K562 (cell line): ENCODE measurements at regions of chr17 and their contacts with region 1.

Region 1: GRCh38 chr17:45394913-45395568 is 37.6 kb downstream of the ARHGAP27 start:
- DNase-seq: peak; percentile 93 to 95 (median 94)
- ATAC-seq: peak; percentile 94
- H3K4me3 ChIP-seq: no peak overlapping the region
- H3K27ac ChIP-seq: peak overlapping the region; percentile 61
- H3K4me1 ChIP-seq: peaks cover 14 to 29% of the 10 kb centered on the region in 2 experiments; a peak in 4 of 5 replicates
- H3K27me3 ChIP-seq: 0 out of 5 replicates have a peak, but pooled peaks cover 0 to 4% of the 10 kb centered on the region in 2 experiments
- CTCF ChIP-seq: peak; percentile 87 to 90 (median 88)
- EP300 ChIP-seq: peak; percentile 87
- POLR2A ChIP-seq: no peak
- RAD21 ChIP-seq: peak; percentile 69 to 84

Region 2: GRCh38 chr17:45172454-45173286 is 222.4 kb before region 1 on chr17:
- CTCF ChIA-PET with region 1: no interaction called
- POLR2A ChIA-PET with region 1: no interaction called
- in situ Hi-C with region 1: no loop called
- intact Hi-C with region 1: no loop called
- DNase-seq: no peak
- ATAC-seq: no peak
- H3K4me3 ChIP-seq: no peak overlapping the region
- H3K27ac ChIP-seq: no peak overlapping the region
- H3K4me1 ChIP-seq: peaks cover 2 to 38% of the 10 kb centered on the region in 2 experiments; a peak in 3 of 5 replicates
- H3K27me3 ChIP-seq: no peaks in the 10 kb centered on the region
- CTCF ChIP-seq: no peak
- EP300 ChIP-seq: no peak
- POLR2A ChIP-seq: no peak
- RAD21 ChIP-seq: no peak

Region 3: GRCh38 chr17:45428050-45428617 is 33.1 kb after region 1 on chr17:
- CTCF ChIA-PET with region 1: interaction called, 6 read pairs
- POLR2A ChIA-PET with region 1: no interaction called
- in situ Hi-C with region 1: no loop called
- intact Hi-C with region 1: loop called (anchors 2 kb)
- DNase-seq: peak; percentile 68 to 80 (median 80)
- ATAC-seq: peak; percentile 72
- H3K4me3 ChIP-seq: no peak overlapping the region
- H3K27ac ChIP-seq: no peak overlapping the region
- H3K4me1 ChIP-seq: peaks cover 8 to 54% of the 10 kb centered on the region in 2 experiments
- H3K27me3 ChIP-seq: no peaks in the 10 kb centered on the region
- CTCF ChIP-seq: peak; percentile 82 to 95 (median 89)
- EP300 ChIP-seq: no peak
- POLR2A ChIP-seq: no peak
- RAD21 ChIP-seq: peak; percentile 64 to 86

Region 4: GRCh38 chr17:45440155-45440778 is 45.2 kb after region 1 on chr17:
- CTCF ChIA-PET with region 1: no interaction called
- POLR2A ChIA-PET with region 1: no interaction called
- in situ Hi-C with region 1: no loop called
- intact Hi-C with region 1: no loop called
- DNase-seq: peak in 2 of 4 experiments; percentile 18 to 21
- ATAC-seq: peak; percentile 40; the same call in 1 of the 3 replicates
- H3K4me3 ChIP-seq: no peak overlapping the region
- H3K27ac ChIP-seq: no peak overlapping the region
- H3K4me1 ChIP-seq: peaks cover 0 to 12% of the 10 kb centered on the region in 2 experiments; a peak in 2 of 5 replicates
- H3K27me3 ChIP-seq: no peaks in the 10 kb centered on the region
- CTCF ChIP-seq: no peak
- EP300 ChIP-seq: no peak
- POLR2A ChIP-seq: no peak
- RAD21 ChIP-seq: no peak

Region 5: GRCh38 chr17:45852535-45853297 is 457.7 kb after region 1 on chr17:
- CTCF ChIA-PET with region 1: no interaction called
- POLR2A ChIA-PET with region 1: no interaction called
- in situ Hi-C with region 1: loop called (anchors 25 kb)
- intact Hi-C with region 1: loop called (anchors 10 kb)
- DNase-seq: peak; percentile 66 to 81 (median 70)
- ATAC-seq: peak; percentile 76
- H3K4me3 ChIP-seq: no peak overlapping the region
- H3K27ac ChIP-seq: no peak overlapping the region
- H3K4me1 ChIP-seq: peaks cover 0 to 9% of the 10 kb centered on the region in 2 experiments; a peak in 2 of 5 replicates
- H3K27me3 ChIP-seq: peaks cover 0 to 30% of the 10 kb centered on the region in 2 experiments; a peak in 2 of 5 replicates
- CTCF ChIP-seq: peak; percentile 88 to 96 (median 90)
- EP300 ChIP-seq: no peak
- POLR2A ChIP-seq: no peak
- RAD21 ChIP-seq: peak; percentile 72 to 81